MCF 10A (cell line): ENCODE measurements at regions of chr4 and their contacts with region 1.

Region 1: DNA sequence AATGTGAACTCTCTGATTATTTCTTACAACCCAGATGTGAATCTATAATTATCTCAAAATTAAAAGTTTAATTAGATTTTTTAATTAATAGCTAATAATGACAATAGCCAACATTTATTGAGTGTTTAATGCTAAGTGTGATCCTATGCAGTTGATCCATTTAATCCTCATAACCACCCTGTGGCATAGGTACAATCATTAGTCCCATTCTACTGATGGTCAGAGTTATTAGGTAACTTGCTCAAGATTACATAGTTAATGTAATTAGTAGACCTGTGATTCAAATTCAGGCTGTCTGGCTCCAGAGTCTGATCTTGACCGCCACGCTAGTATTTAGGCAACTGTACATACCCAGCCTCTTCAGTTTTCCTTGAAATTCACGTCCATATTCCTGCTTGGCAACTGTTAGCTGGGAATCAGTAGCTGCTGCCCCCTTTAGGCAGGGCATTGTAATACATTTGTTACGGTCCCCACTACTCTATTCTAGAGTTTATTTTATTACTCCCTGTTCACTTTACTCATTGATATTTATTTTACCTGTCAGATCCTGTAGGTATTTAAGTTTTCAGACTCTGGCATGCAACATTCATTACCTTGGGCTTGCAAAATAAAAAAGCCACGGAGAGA is 20.6 kb upstream of the TEC start:
- DNase-seq: peak; percentile 55
- H3K4me3 Mint-ChIP-seq: no peak overlapping the region
- H3K27ac Mint-ChIP-seq: no peak overlapping the region
- H3K4me1 Mint-ChIP-seq: no peaks in the 10 kb centered on the region
- H3K27me3 Mint-ChIP-seq: no peaks in the 10 kb centered on the region
- CTCF ChIP-seq: peak; percentile 67

Region 2: DNA sequence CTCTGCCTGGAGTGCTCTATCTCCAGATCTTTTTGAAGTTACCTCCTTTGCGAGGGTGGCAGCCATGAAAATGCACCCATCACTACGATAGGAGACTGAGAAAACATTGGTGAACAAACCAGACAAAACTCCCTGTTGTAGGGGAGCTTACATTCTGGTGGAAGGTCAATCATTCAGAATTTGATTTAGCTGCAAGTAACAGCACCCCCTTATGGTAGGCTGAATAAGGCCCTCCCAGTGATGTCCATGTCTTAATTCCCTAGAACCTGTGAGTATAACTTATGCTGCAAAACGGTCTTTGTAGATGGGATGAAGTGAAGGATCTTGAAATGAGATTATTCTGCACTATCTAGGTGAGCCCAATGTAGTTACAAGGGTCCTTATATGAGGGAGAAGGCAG is 15.0 kb before region 1 on chr4:
- CTCF ChIA-PET with region 1: interaction called, 10 read pairs
- POLR2A ChIA-PET with region 1: no interaction called
- intact Hi-C with region 1: no loop called
- DNase-seq: peak; percentile 57
- H3K4me3 Mint-ChIP-seq: no peak overlapping the region
- H3K27ac Mint-ChIP-seq: no peak overlapping the region
- H3K4me1 Mint-ChIP-seq: no peaks in the 10 kb centered on the region
- H3K27me3 Mint-ChIP-seq: no peaks in the 10 kb centered on the region
- CTCF ChIP-seq: peak; percentile 63